ENCODE measurements at regions of chr2 and their contacts with region 1.

Region 1: GRCh38 chr2:141611-142010 is 95.3 kb upstream of the FAM110C start:
- DNase-seq: no peak
- ATAC-seq: no peak
- H3K4me3 Mint-ChIP-seq: no peak overlapping the region
- H3K27ac Mint-ChIP-seq: no peak overlapping the region
- H3K4me1 Mint-ChIP-seq: no peaks in the 10 kb centered on the region
- H3K27me3 Mint-ChIP-seq: peaks cover 3% of the 10 kb centered on the region

Region 2: GRCh38 chr2:11248-11941 is 130.2 kb before region 1 on chr2:
- CTCF ChIA-PET with region 1: interaction called, 13 read pairs
- POLR2A ChIA-PET with region 1: no interaction called
- DNase-seq: peak; percentile 67
- ATAC-seq: peak; percentile 44
- H3K4me3 Mint-ChIP-seq: no peak overlapping the region
- H3K27ac Mint-ChIP-seq: no peak overlapping the region
- H3K4me1 Mint-ChIP-seq: no peaks in the 10 kb centered on the region
- H3K27me3 Mint-ChIP-seq: peaks cover 14% of the 10 kb centered on the region

Region 3: DNA sequence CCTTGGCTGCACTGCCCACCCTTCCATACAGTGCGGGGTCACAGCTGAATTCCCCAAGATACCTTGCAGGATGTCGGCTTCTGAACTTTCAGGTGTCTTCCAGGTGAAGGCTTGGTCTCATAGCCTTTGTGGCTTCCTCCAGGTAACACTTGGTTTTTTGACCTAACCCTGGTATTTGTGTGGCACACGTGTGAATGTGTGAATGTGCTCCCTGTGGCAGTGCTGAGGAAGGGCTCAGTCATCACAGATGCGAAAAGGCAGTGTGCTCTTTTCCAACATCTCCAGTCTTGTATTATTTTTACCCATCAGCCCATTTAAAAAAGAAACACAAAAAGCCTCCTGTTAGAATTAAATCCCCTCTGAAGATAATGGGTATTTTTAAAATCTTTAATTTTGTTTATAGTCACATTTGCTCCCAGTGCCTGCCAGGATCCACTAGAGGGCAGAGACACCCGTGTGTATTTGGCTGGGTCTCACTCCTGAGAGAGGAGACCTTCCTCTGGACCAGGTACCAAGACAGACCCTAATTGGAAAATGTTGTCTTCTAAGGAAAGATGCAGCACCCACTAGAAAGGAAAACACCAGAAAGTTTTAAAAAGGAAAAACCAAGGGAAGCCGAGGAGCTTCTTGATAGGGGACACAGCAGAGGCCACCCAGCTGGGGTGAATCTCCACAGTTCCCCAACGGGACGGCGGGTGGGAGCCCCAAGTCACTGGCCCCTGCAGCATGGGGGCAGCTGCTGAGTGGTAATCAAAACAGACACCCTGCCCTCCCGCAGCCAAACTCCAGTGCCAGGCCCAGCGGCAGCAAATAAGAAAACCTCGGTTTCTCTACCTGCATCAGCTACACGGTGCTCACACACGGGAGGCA is 123.0 kb before region 1 on chr2:
- CTCF ChIA-PET with region 1: interaction called, 14 read pairs
- POLR2A ChIA-PET with region 1: no interaction called
- DNase-seq: no peak
- ATAC-seq: no peak
- H3K4me3 Mint-ChIP-seq: no peak overlapping the region
- H3K27ac Mint-ChIP-seq: no peak overlapping the region
- H3K4me1 Mint-ChIP-seq: no peaks in the 10 kb centered on the region
- H3K27me3 Mint-ChIP-seq: peaks cover 20% of the 10 kb centered on the region

Region 4: GRCh38 chr2:24107-24506 is 117.5 kb before region 1 on chr2:
- CTCF ChIA-PET with region 1: interaction called, 14 read pairs
- POLR2A ChIA-PET with region 1: no interaction called
- DNase-seq: no peak
- ATAC-seq: no peak
- H3K4me3 Mint-ChIP-seq: no peak overlapping the region
- H3K27ac Mint-ChIP-seq: no peak overlapping the region
- H3K4me1 Mint-ChIP-seq: peaks cover 35% of the 10 kb centered on the region
- H3K27me3 Mint-ChIP-seq: peaks cover 7% of the 10 kb centered on the region